ENCODE measurements at regions of chr6 and their contacts with region 1.

Region 1: DNA sequence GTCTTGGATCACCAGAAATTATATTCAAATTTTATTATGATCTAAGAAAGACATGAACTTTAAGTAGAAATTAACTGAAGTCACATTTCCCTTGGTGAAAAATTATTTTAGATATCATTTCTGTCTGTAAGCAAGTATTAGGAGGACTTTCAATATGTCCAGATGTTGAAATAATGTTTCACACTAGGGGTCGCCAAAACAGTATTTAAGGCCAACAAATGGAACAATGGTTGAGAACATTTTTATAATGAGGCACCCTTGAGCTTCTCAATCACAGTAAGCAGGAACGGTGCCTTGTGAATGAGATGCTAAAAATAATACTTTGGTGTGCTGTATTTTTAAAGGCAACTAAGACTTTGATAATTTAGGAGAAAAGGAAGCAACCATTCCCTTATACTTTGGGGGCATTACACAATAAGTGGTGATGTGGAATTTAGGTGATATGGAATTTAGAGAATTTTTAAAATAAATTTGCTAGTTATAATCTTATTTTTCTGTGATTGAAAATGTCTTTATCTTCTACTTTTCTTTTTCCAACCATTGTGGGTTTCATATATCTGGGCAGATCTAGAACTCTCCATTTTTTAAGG is 9.6 kb upstream of the SF3B5 start:
- DNase-seq: no peak
- H3K4me3 ChIP-seq: no peak overlapping the region
- H3K27ac ChIP-seq: no peak overlapping the region
- H3K4me1 ChIP-seq: no peaks in the 10 kb centered on the region
- H3K27me3 ChIP-seq: no peaks in the 10 kb centered on the region
- CTCF ChIP-seq: peak; percentile 61 to 64 (median 62)
- EP300 ChIP-seq: no peak
- POLR2A ChIP-seq: no peak

Region 2: GRCh38 chr6:144482142-144482541 is 377.1 kb after region 1 on chr6:
- intact Hi-C with region 1: loop called (anchors 2 kb)
- DNase-seq: no peak
- H3K4me3 ChIP-seq: no peak overlapping the region
- H3K27ac ChIP-seq: no peak overlapping the region
- H3K4me1 ChIP-seq: peaks cover 11 to 19% (median 12%) of the 10 kb centered on the region in 4 donors
- H3K27me3 ChIP-seq: no peaks in the 10 kb centered on the region
- CTCF ChIP-seq: peak; percentile 59 to 73 (median 66)
- EP300 ChIP-seq: no peak
- POLR2A ChIP-seq: no peak

Measured in esophagus muscularis mucosa (tissue), 4 donors.